HEK293T (cell line): ENCODE measurements at regions of chr17 and their contacts with region 1.

Region 1: DNA sequence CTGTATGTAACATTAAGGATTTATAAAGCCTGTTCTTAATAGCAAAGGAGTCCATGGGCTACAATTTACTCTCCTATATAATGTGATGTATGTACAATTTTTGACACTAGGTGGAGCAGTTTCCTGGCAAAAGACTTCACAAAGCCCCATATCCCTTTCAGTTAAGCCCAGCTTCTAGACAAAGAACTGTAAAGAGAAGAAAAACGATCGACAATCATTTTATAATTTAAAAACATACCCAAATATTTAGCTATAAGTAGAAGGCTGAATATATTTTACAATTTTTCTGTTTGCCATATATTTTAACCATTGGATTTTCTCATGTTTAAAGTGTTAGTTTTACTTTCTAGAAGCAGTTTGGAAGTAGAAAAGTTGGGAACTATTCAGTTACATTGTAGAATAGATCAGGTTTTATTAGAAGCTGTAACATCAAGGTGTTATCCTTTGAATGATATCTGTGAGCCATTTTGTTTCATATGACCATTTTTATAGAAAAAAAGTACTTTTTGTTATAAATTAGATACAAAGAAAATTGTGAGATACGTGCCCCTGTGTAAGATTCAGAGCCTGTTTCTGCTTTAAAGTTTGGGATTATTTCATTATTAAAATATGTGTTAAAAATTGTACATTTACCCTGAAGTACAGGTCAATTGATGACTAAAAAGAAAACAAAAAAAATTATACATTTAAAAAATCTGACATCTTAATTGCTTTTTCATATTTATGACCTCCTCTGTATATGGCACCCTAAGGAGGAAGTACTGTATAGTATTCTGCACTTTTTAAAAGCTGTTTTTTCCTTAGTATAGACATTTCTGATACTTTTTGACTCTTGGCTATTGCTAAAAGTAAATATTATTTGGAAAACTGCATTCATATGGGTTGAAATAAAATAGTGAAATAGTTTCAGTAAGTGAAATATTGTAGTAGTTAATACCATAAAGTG is 46.3 kb downstream of the VMP1 start:
- DNase-seq: peak; percentile 65

Region 2: GRCh38 chr17:59791603-59792457 is 38.0 kb after region 1 on chr17:
- CTCF ChIA-PET with region 1: no interaction called
- POLR2A ChIA-PET with region 1: no interaction called
- DNase-seq: no peak

Region 3: DNA sequence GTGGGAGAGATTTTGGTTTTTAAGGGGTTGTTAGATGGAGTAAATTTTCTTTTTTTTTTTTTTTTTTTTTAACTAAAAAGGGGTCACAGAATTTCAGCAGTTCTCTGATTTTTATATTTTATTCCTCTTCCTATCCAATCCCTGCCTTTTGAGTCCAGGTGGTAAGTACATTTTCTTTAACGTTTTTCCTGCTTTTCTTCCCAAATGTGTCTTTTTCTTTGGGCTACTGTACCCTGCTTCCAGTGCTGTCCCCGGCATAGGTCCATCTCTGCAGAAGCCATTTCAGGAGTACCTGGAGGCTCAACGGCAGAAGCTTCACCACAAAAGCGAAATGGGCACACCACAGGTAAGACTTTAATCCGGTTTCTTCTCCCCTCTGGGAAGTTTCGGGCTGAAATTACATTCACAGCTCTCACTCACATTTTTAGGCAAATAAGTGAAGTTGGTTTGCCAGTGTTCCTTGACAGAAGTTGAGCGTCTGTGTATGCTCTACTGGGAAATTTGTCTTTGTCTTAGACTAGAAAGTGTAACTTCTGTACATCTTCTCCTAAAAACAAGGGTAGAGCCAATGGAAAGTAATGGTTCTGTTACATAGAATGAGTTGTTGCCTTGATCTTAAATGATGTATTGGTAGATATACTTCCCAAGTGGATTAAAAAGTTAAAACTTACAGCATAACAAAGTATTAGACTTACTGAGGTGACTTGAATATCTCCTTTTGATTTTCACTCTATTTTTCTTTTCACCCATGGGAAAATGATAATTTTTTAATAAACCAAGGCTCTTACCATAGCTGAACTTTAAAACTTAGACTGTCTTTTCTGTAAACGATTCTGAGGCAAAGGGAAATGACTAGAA is 84.5 kb after region 1 on chr17:
- CTCF ChIA-PET with region 1: interaction called, 15 read pairs
- POLR2A ChIA-PET with region 1: interaction called, 3 read pairs
- DNase-seq: no peak